PC-9 (cell line): ENCODE measurements at regions of chr10 and their contacts with region 1.

Region 1: DNA sequence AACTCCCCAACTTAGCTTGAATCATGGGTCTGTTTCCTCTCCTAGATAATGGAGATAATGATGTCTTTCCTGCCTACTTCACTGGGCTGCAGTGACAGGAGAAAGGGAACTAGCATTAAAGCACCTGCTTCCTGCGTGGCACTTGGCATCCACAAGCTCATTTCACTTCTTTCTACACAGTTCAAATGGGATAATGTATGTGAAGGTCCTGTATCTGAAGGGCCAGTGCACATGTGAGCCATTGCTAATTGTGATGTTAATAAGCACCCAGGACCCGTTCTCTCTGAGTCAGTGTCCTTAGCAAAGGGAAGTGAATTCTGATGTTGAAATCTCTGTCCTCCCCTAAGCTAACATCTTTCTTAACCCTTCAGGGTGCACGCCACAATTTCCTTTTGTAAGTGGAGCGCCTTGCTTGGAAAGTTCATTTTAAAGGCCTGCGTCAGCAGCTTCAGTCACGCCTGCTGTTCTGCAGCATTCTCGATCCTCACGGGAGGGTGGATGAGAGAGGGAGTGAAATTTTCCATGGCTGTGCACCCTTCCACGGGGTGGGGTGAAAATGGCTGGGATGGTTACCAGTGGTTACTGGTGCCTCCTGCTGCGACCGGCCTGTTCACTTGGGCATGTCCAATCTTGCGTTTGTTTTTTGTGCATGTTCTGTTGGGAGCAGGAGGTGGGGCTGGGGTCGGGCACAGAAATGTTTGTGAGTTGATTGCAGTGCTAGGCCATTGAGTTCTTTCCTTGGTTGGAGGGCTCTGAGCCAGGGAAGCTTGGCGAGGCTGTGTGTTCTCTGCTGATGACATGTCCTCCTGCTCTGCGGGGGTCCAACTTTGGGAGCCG is 59.2 kb downstream of the HK1 start:
- DNase-seq: peak; percentile 81 to 82
- H3K4me3 ChIP-seq: no peak overlapping the region; the same call in 1 of the 2 replicates
- H3K27ac ChIP-seq: peak overlapping the region; percentile 42
- H3K4me1 ChIP-seq: peaks cover 70% of the 10 kb centered on the region
- H3K27me3 ChIP-seq: no peaks in the 10 kb centered on the region
- CTCF ChIP-seq: no peak

Region 2: DNA sequence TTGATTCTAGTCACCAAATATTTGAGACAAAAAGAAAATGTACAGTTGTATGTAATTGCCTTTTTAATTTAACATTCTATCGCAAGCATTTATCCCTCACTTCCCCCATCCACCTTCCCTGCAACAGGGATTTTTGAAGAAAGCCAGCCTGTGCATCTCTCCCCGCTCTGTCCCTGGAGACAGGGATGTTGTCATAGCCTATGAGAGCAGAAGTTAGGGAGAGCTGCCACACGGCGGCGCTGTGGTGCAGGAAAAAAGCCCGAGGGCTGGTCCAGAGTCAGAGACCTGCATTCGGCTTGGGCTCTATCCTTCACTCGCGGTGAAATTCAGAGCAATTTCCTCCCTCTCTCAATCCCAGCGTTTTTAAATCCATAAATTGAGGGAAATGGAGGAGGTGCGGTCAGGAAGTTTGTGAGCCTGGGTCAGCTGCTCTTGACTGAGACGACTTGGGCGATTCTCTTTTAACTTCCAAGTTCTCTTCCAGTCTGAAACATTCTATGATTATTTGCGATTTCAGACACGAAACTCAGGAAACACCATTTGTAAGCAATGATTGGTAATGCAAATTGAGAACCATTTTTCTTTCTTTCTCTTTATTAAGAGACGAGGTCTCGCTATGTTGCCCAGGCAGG is 99.9 kb before region 1 on chr10:
- CTCF ChIA-PET with region 1: no interaction called
- POLR2A ChIA-PET with region 1: no interaction called
- intact Hi-C with region 1: loop called (anchors 2 kb)
- DNase-seq: peak; percentile 62 to 90
- H3K4me3 ChIP-seq: no peak overlapping the region
- H3K27ac ChIP-seq: peak overlapping the region; percentile 37; the same call in 1 of the 2 replicates
- H3K4me1 ChIP-seq: peaks cover 28% of the 10 kb centered on the region
- H3K27me3 ChIP-seq: no peaks in the 10 kb centered on the region
- CTCF ChIP-seq: peak; percentile 98

Region 3: GRCh38 chr10:69318106-69318866 is 19.2 kb before region 1 on chr10:
- CTCF ChIA-PET with region 1: interaction called, 6 read pairs
- POLR2A ChIA-PET with region 1: interaction called, 8 read pairs
- intact Hi-C with region 1: loop called (anchors 1 kb)
- DNase-seq: peak; percentile 74 to 95
- H3K4me3 ChIP-seq: peak overlapping the region; percentile 97
- H3K27ac ChIP-seq: peak overlapping the region; percentile 73
- H3K4me1 ChIP-seq: peaks cover 64% of the 10 kb centered on the region
- H3K27me3 ChIP-seq: no peaks in the 10 kb centered on the region
- CTCF ChIP-seq: no peak

Region 4: GRCh38 chr10:69348816-69349541 is 11.5 kb after region 1 on chr10:
- CTCF ChIA-PET with region 1: interaction called, 3 read pairs
- POLR2A ChIA-PET with region 1: interaction called, 9 read pairs
- intact Hi-C with region 1: loop called (anchors 1 kb)
- DNase-seq: peak; percentile 88 to 98
- H3K4me3 ChIP-seq: peak overlapping the region; percentile 14; the same call in 1 of the 2 replicates
- H3K27ac ChIP-seq: peak overlapping the region; percentile 89
- H3K4me1 ChIP-seq: peaks cover 79% of the 10 kb centered on the region
- H3K27me3 ChIP-seq: no peaks in the 10 kb centered on the region
- CTCF ChIP-seq: no peak

Region 5: GRCh38 chr10:69360485-69361324 is 23.2 kb after region 1 on chr10:
- CTCF ChIA-PET with region 1: interaction called, 19 read pairs
- POLR2A ChIA-PET with region 1: interaction called, 10 read pairs
- intact Hi-C with region 1: loop called (anchors 1 kb)
- DNase-seq: peak; percentile 89 to 94
- H3K4me3 ChIP-seq: no peak overlapping the region
- H3K27ac ChIP-seq: peak overlapping the region; percentile 89
- H3K4me1 ChIP-seq: peaks cover 50% of the 10 kb centered on the region
- H3K27me3 ChIP-seq: no peaks in the 10 kb centered on the region
- CTCF ChIP-seq: no peak

Region 6: DNA sequence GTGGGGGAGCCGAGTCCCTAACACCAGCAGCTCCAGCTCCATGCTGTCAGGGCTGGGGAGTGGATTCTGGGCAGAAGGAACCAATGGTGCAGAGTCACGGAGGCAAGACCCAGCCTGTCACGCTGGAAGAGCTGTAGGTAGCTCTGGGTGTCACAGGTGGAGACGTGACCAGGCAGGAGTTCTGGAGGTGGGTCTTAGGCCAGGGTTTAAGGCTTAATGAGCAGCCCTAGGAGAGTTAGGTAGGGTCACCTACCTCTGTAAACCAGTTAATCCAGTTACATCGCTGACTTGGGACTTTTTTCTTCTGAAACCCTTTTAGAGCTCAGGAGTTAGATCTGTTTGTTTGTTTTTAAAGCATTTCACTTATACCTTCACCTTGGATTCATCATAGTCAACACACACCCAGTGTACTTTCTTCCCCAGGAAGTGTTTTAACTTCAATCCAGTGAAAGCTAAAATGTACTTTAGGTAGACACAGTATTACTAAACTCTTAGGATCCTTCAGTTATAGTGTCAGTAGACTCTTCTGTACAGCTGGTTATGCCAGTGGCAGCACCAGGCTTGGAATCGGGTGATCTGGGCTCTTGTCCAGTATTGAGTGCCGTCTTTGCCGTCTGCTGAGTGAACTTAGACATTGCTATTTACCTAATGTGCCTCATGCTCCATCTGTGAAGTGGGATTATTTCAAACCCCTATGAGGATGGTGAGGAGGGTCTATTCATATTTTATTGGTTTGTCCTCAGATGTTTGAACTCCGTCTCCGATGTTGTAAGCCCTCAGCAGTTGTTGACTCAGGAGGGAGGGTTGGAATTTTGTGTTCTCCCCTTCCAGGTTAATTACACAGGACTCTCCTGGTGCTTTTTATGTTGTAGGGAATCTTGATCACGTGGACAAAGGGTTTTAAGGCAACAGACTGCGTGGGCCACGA is 48.2 kb after region 1 on chr10:
- CTCF ChIA-PET with region 1: interaction called, 3 read pairs
- POLR2A ChIA-PET with region 1: interaction called, 10 read pairs
- intact Hi-C with region 1: loop called (anchors 2 kb)
- DNase-seq: peak; percentile 69 to 97
- H3K4me3 ChIP-seq: peak overlapping the region; percentile 20
- H3K27ac ChIP-seq: peak overlapping the region; percentile 91
- H3K4me1 ChIP-seq: peaks cover 75% of the 10 kb centered on the region
- H3K27me3 ChIP-seq: no peaks in the 10 kb centered on the region
- CTCF ChIP-seq: no peak

Region 7: GRCh38 chr10:69458426-69459108 is 121.1 kb after region 1 on chr10:
- CTCF ChIA-PET with region 1: no interaction called
- POLR2A ChIA-PET with region 1: no interaction called
- intact Hi-C with region 1: loop called (anchors 5 kb)
- DNase-seq: peak; percentile 97 to 98
- H3K4me3 ChIP-seq: peak overlapping the region; percentile 37
- H3K27ac ChIP-seq: peak overlapping the region; percentile 95
- H3K4me1 ChIP-seq: peaks cover 88% of the 10 kb centered on the region
- H3K27me3 ChIP-seq: no peaks in the 10 kb centered on the region
- CTCF ChIP-seq: no peak

Region 8: GRCh38 chr10:69957886-69958555 is 620.5 kb after region 1 on chr10:
- CTCF ChIA-PET with region 1: no interaction called
- POLR2A ChIA-PET with region 1: no interaction called
- intact Hi-C with region 1: no loop called
- DNase-seq: peak; percentile 29 to 46
- H3K4me3 ChIP-seq: no peak overlapping the region
- H3K27ac ChIP-seq: no peak overlapping the region
- H3K4me1 ChIP-seq: no peaks in the 10 kb centered on the region
- H3K27me3 ChIP-seq: no peaks in the 10 kb centered on the region
- CTCF ChIP-seq: peak; percentile 91